Activated naive CD4-positive, alpha-beta T cell treated with anti-CD3 and anti-CD28 coated beads for 36 hours (primary cell): ENCODE measurements at regions of chrX and their contacts with region 1.

Region 1: GRCh38 chrX:106415276-106415895 is 196.4 kb upstream of the RADX start:
- DNase-seq: peak; percentile 6
- H3K4me3 Mint-ChIP-seq: no peak overlapping the region
- H3K27ac Mint-ChIP-seq: no peak overlapping the region
- H3K4me1 Mint-ChIP-seq: no peaks in the 10 kb centered on the region
- H3K27me3 Mint-ChIP-seq: no peaks in the 10 kb centered on the region

Region 2: DNA sequence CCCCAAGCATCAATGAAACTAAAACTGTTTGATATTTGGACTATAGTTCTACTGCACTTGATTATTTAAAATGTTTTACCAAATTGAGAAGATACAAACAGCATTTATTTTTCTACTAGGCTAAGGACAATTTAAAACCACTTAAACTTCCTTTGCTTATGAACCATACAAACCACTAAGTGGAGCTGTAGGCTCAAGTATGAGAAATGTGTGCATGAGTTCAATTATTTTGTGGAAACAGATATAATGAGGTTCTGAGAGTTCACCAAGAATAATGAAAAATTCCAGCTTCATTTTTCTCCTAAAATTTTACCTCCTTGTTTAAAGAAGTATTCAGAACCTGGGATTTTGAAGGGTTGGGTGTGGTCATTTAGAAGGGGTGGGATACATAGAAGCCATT is 440.0 kb before region 1 on chrX:
- CTCF ChIA-PET with region 1: no interaction called
- intact Hi-C with region 1: no loop called
- DNase-seq: no peak
- H3K4me3 Mint-ChIP-seq: no peak overlapping the region
- H3K27ac Mint-ChIP-seq: no peak overlapping the region
- H3K4me1 Mint-ChIP-seq: no peaks in the 10 kb centered on the region
- H3K27me3 Mint-ChIP-seq: no peaks in the 10 kb centered on the region

Region 3: GRCh38 chrX:106331606-106332005 is 83.8 kb before region 1 on chrX:
- CTCF ChIA-PET with region 1: no interaction called
- intact Hi-C with region 1: no loop called
- DNase-seq: no peak
- H3K4me3 Mint-ChIP-seq: no peak overlapping the region
- H3K27ac Mint-ChIP-seq: no peak overlapping the region
- H3K4me1 Mint-ChIP-seq: no peaks in the 10 kb centered on the region
- H3K27me3 Mint-ChIP-seq: no peaks in the 10 kb centered on the region

Region 4: GRCh38 chrX:106457802-106458201 is 42.4 kb after region 1 on chrX:
- CTCF ChIA-PET with region 1: no interaction called
- intact Hi-C with region 1: no loop called
- DNase-seq: no peak
- H3K4me3 Mint-ChIP-seq: no peak overlapping the region
- H3K27ac Mint-ChIP-seq: no peak overlapping the region
- H3K4me1 Mint-ChIP-seq: no peaks in the 10 kb centered on the region
- H3K27me3 Mint-ChIP-seq: no peaks in the 10 kb centered on the region

Region 5: GRCh38 chrX:106791495-106791894 is 376.1 kb after region 1 on chrX:
- CTCF ChIA-PET with region 1: no interaction called
- intact Hi-C with region 1: loop called (anchors 2 kb)
- DNase-seq: no peak
- H3K4me3 Mint-ChIP-seq: no peak overlapping the region
- H3K27ac Mint-ChIP-seq: no peak overlapping the region
- H3K4me1 Mint-ChIP-seq: no peaks in the 10 kb centered on the region
- H3K27me3 Mint-ChIP-seq: no peaks in the 10 kb centered on the region